ENCODE measurements at regions of chr2 and their contacts with region 1.

Region 1: GRCh38 chr2:94956797-94957391 is 68.6 kb upstream of the MAL start:
- DNase-seq: peak in 1 of 2 experiments; percentile 56
- H3K4me3 ChIP-seq: no peak overlapping the region
- H3K4me3 Mint-ChIP-seq: no peak overlapping the region
- H3K27ac Mint-ChIP-seq: no peak overlapping the region
- H3K4me1 ChIP-seq: no peaks in the 10 kb centered on the region
- H3K4me1 Mint-ChIP-seq: no peaks in the 10 kb centered on the region
- H3K27me3 ChIP-seq: no peaks in the 10 kb centered on the region
- H3K27me3 Mint-ChIP-seq: peaks cover 19% of the 10 kb centered on the region
- CTCF ChIP-seq: peak; percentile 82 to 89

Region 2: GRCh38 chr2:94861308-94862152 is 95.4 kb before region 1 on chr2:
- CTCF ChIA-PET with region 1: interaction called, 4 read pairs
- POLR2A ChIA-PET with region 1: no interaction called
- intact Hi-C with region 1: loop called (anchors 2 kb)
- DNase-seq: peak in 1 of 2 experiments; percentile 4
- H3K4me3 ChIP-seq: no peak overlapping the region
- H3K4me3 Mint-ChIP-seq: no peak overlapping the region
- H3K27ac Mint-ChIP-seq: no peak overlapping the region
- H3K4me1 ChIP-seq: no peaks in the 10 kb centered on the region
- H3K4me1 Mint-ChIP-seq: no peaks in the 10 kb centered on the region
- H3K27me3 ChIP-seq: no peaks in the 10 kb centered on the region
- H3K27me3 Mint-ChIP-seq: peaks cover 8% of the 10 kb centered on the region
- CTCF ChIP-seq: no peak

Region 3: DNA sequence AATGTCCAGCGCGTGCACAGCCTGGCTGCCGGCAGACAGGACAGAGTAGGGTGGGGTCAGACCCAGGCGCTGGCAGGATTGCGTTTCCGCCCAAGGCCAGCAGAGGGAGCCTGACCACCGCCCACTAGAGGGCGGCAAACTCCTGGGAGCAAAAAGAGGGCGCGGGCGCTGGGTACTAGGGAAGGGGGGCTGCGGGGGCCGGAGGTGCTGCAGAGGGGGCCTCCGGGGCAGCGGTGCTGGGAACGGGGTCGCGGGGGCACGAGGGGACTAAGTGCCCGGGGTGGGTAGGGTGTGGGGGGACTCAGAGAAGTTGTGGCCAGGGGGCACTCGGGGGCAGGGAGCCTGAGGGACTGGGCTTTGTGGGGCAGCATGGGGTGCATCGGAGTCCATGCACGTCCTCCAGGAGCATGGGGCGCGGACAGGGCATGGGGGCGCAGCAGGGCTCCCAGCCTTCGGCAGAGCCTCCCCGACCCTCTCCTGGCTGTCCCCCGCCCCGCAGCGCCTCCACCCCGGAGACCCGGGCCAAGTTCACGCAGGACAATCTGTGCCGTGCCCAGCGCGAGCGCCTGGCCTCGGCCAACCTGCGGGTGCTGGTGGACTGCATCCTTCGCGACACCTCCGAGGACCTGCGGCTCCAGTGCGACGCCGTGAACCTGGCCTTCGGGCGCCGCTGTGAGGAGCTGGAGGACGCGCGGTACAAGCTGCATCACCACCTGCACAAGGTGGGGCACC is 82.5 kb before region 1 on chr2:
- CTCF ChIA-PET with region 1: interaction called, 7 read pairs
- POLR2A ChIA-PET with region 1: no interaction called
- intact Hi-C with region 1: loop called (anchors 1 kb)
- DNase-seq: peak; percentile 62 to 79
- H3K4me3 ChIP-seq: no peak overlapping the region
- H3K4me3 Mint-ChIP-seq: no peak overlapping the region
- H3K27ac Mint-ChIP-seq: no peak overlapping the region
- H3K4me1 ChIP-seq: no peaks in the 10 kb centered on the region
- H3K4me1 Mint-ChIP-seq: no peaks in the 10 kb centered on the region
- H3K27me3 ChIP-seq: no peaks in the 10 kb centered on the region
- H3K27me3 Mint-ChIP-seq: peaks cover 4% of the 10 kb centered on the region
- CTCF ChIP-seq: peak; percentile 92 to 99

Region 4: DNA sequence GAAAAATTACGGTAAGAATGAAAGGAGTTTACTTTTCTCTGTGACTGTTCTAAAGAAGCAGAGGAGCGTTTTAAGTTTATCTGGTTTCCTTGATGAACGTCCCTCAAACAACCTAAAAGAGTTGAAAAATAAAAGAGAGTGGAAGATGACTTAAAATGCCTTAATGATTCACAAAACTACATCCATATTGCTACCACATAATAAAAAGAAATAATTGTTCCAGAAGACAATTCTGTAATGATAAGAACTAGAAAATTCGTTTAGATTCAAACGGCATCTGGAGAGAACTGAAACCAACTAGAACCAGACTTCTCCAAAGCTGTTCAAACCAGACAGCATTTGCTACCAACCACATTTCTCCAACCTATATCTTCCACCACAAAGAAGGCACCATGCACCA is 17.5 kb before region 1 on chr2:
- CTCF ChIA-PET with region 1: no interaction called
- POLR2A ChIA-PET with region 1: no interaction called
- intact Hi-C with region 1: no loop called
- DNase-seq: no peak
- H3K4me3 ChIP-seq: no peak overlapping the region
- H3K4me3 Mint-ChIP-seq: no peak overlapping the region
- H3K27ac Mint-ChIP-seq: no peak overlapping the region
- H3K4me1 ChIP-seq: no peaks in the 10 kb centered on the region
- H3K4me1 Mint-ChIP-seq: no peaks in the 10 kb centered on the region
- H3K27me3 ChIP-seq: no peaks in the 10 kb centered on the region
- H3K27me3 Mint-ChIP-seq: peaks cover 22% of the 10 kb centered on the region
- CTCF ChIP-seq: no peak

Region 5: GRCh38 chr2:95143838-95144237 is 186.9 kb after region 1 on chr2:
- CTCF ChIA-PET with region 1: no interaction called
- POLR2A ChIA-PET with region 1: no interaction called
- intact Hi-C with region 1: no loop called
- DNase-seq: no peak
- H3K4me3 ChIP-seq: no peak overlapping the region
- H3K4me3 Mint-ChIP-seq: no peak overlapping the region
- H3K27ac Mint-ChIP-seq: no peak overlapping the region
- H3K4me1 ChIP-seq: no peaks in the 10 kb centered on the region
- H3K4me1 Mint-ChIP-seq: no peaks in the 10 kb centered on the region
- H3K27me3 ChIP-seq: no peaks in the 10 kb centered on the region
- H3K27me3 Mint-ChIP-seq: no peaks in the 10 kb centered on the region
- CTCF ChIP-seq: no peak